Mammary epithelial cell (primary cell): ENCODE measurements at regions of chr5 and their contacts with region 1.

Region 1: DNA sequence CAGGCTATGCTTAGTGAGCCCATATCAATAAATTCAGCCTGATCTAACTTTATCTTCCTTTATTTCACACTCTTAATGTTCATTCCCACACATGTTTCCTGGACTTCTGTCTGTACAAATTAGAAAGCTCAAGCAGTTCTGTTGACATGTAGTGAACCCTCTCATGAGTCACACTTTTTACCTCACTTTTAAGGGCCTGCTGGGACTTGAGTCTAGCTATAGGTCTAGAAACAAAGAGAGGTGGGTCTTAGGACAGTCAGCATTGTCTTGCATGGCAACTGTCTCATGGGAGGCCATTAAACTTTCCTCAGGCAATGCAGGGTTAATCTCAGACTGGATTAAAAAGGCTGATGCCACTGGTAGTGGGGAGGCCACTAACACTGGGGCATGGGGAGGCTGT is 8.6 kb upstream of the CCNH start:
- DNase-seq: peak; percentile 81
- H3K4me3 ChIP-seq: no peak overlapping the region
- H3K27ac ChIP-seq: peak overlapping the region; percentile 51
- H3K4me1 ChIP-seq: peaks cover 14% of the 10 kb centered on the region
- H3K27me3 ChIP-seq: no peaks in the 10 kb centered on the region
- CTCF ChIP-seq: no peak

Region 2: GRCh38 chr5:87541033-87541432 is 119.7 kb after region 1 on chr5:
- CTCF ChIA-PET with region 1: no interaction called
- dilution Hi-C with region 1: no loop called
- in situ Hi-C with region 1: no loop called
- intact Hi-C with region 1: loop called (anchors 5 kb)
- DNase-seq: peak; percentile 63
- H3K4me3 ChIP-seq: no peak overlapping the region
- H3K27ac ChIP-seq: no peak overlapping the region
- H3K4me1 ChIP-seq: no peaks in the 10 kb centered on the region
- H3K27me3 ChIP-seq: no peaks in the 10 kb centered on the region
- CTCF ChIP-seq: peak; percentile 31 to 48

Region 3: GRCh38 chr5:87762631-87763030 is 341.3 kb after region 1 on chr5:
- CTCF ChIA-PET with region 1: no interaction called
- dilution Hi-C with region 1: no loop called
- in situ Hi-C with region 1: loop called in 1 of 2 experiments (anchors 25 kb)
- intact Hi-C with region 1: loop called (anchors 5 kb)
- DNase-seq: peak; percentile 41
- H3K4me3 ChIP-seq: no peak overlapping the region
- H3K27ac ChIP-seq: no peak overlapping the region
- H3K4me1 ChIP-seq: peaks cover 4% of the 10 kb centered on the region
- H3K27me3 ChIP-seq: no peaks in the 10 kb centered on the region
- CTCF ChIP-seq: no peak

Region 4: DNA sequence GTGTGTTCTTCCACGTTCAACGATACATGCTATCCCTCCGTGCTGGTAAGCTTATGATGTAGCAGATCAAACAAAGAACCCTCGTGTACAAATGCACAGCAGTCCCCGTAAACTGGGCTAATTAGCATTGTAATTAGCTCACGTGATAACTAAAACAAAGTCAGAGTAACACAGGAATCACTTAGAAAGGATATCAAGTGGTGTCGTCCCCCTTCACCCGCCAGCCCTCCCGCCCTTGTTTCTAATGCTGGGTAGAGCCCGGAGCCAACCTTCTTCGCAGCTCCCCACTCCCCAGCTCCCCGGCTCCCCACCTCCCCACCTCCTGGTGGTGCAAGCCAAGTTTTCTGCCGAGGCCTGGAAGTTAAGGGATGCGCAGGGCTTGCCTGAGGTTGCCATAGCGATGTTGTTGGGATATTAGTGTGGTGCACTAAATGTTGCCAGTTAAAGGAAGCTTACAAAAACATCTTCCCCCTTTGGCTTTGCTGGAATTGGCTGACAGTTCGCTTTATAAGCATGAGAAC is 349.4 kb after region 1 on chr5:
- CTCF ChIA-PET with region 1: no interaction called
- dilution Hi-C with region 1: no loop called
- in situ Hi-C with region 1: loop called in 1 of 2 experiments (anchors 25 kb)
- intact Hi-C with region 1: loop called (anchors 1 kb)
- DNase-seq: no peak
- H3K4me3 ChIP-seq: no peak overlapping the region
- H3K27ac ChIP-seq: no peak overlapping the region
- H3K4me1 ChIP-seq: peaks cover 6% of the 10 kb centered on the region
- H3K27me3 ChIP-seq: no peaks in the 10 kb centered on the region
- CTCF ChIP-seq: no peak

Region 5: GRCh38 chr5:88690409-88691229 is 1269.3 kb after region 1 on chr5:
- CTCF ChIA-PET with region 1: no interaction called
- dilution Hi-C with region 1: no loop called
- in situ Hi-C with region 1: loop called in 1 of 2 experiments (anchors 25 kb)
- intact Hi-C with region 1: loop called (anchors 2 kb)
- DNase-seq: peak; percentile 32
- H3K4me3 ChIP-seq: no peak overlapping the region
- H3K27ac ChIP-seq: no peak overlapping the region
- H3K4me1 ChIP-seq: no peaks in the 10 kb centered on the region
- H3K27me3 ChIP-seq: peaks cover 93% of the 10 kb centered on the region
- CTCF ChIP-seq: peak; percentile 93 to 97